Dorsolateral prefrontal cortex (tissue), 120 donors: ENCODE measurements at regions of chr17 and their contacts with region 1.

Region 1: DNA sequence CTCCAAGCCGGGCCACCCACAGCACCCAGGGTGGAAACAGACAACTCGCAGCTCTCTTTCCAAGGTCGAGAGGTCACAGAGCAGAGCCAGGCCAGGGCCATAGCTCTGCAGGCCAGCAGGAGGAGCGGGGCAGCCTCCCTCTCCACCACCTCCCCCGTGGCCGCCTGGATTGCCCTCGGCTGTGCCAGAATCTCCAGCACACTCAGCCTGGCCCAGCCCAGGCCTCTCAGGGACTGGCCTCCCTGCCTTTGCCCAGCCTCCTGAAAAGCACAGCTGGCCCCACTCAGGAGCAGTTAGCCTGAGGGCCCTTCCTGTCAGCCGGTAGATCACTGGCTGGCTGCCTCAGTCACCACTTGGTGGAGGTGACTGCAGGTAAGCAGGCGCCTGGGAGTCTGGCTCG is 85.8 kb upstream of the SEC14L1 start:
- DNase-seq: no peak
- H3K4me3 ChIP-seq: no peak overlapping the region
- H3K27ac ChIP-seq: no peak overlapping the region
- H3K27me3 ChIP-seq: peaks cover 0 to 10% (median 0%) of the 10 kb centered on the region in 45 donors
- CTCF ChIP-seq: no peak

Region 2: DNA sequence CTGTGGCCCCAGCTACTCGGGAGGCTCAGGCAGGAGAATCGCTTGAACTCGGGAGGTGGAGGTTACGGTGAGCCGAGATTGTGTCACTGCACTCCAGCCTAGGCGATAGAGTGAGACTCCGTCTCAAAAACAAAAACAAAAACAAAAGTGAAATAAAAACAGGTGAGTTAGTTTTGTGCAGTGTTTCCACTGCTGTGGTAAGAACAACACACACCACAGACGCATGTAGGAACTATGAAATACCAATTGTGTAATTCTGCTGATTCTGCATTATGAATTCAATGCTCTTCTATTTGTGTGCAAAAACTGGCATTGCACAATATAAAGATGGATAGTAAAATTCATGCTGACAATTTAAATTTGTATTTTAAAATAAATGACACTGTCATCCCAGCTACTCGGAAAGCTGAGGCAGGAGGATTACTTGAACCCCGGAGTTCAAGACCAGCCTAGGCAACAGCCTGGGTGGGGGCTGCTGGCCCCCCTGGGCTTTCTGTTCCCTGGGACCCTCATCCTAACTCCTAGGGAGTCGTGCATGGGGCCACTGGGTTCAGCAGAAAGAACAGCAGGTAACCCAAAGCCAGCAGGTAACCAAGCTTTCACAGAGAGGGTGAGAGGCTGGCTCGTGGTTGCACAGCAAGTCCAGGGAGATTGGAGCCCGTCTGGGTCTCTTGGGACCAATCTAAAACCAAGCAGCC is 543.1 kb before region 1 on chr17:
- intact Hi-C with region 1: loop called in 1 of 2 experiments (anchors 5 kb)
- DNase-seq: no peak
- H3K4me3 ChIP-seq: no peak overlapping the region
- H3K27ac ChIP-seq: no peak overlapping the region
- H3K27me3 ChIP-seq: peaks cover 0 to 3% (median 0%) of the 10 kb centered on the region in 45 donors
- CTCF ChIP-seq: no peak

Region 3: DNA sequence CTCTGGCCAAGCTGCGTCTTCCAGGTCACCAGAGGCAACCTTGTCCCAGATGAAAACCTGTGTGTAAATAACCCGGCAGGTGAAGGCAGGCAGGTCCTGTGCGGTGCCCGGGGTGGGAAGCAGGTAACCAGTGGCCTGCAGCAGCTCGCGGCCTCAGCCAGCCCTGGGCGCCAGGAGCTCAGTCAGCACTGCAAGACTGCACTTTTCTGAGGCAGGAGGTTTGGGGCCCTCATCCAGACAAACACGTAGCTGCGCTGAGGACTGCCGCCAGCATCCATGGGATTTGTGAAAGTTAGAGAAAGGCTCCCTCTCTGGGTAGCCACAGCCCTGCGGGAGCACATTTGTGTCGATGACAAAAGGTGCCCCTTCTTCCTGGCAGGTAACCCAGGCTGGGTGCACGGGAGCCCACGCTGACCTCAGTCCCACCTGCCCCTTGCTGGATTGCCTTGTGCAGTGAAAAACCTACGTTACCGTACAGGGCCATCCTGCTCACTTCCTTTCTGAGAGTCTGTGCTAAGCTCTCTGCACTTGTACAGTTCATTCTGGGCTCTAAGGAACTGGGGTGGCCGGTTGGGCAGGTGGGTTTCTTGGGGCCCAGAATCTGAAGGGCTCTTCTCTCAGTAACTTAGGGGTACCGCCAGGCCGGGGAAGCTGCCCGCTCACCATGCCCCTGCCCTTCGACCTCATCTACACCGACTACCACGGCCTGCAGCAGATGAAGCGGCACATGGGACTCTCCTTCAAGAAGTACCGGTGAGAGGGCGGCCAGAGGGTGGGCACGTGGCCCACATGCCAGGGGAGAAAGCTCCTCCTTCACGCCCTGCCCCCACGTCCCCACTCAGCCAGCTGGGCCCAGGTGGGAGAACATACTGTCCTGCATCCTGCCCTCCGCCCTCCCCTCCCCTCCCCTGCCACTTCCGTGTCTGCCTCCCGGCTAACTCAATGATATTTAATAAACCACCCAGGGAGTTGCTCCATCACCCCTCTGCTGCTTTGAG is 130.3 kb before region 1 on chr17:
- intact Hi-C with region 1: no loop called
- DNase-seq: peak in 2 of 10 donors; percentile 29 to 61
- H3K4me3 ChIP-seq: no peak overlapping the region
- H3K27ac ChIP-seq: peak overlapping the region in 25 of 59 donors; percentile 1 to 76 (median 38)
- H3K27me3 ChIP-seq: no peaks in the 10 kb centered on the region
- CTCF ChIP-seq: no peak

Region 4: GRCh38 chr17:77011173-77012011 is 43.5 kb before region 1 on chr17:
- intact Hi-C with region 1: loop called in 1 of 2 experiments (anchors 5 kb)
- DNase-seq: peak in 3 of 10 donors; percentile 47 to 73 (median 58)
- H3K4me3 ChIP-seq: no peak overlapping the region
- H3K27ac ChIP-seq: no peak overlapping the region
- H3K27me3 ChIP-seq: peaks cover 0 to 3% (median 0%) of the 10 kb centered on the region in 45 donors
- CTCF ChIP-seq: peak; percentile 18 to 69 (median 55)

Region 5: GRCh38 chr17:77208217-77208808 is 153.4 kb after region 1 on chr17:
- intact Hi-C with region 1: no loop called
- DNase-seq: peak in 7 of 10 donors; percentile 50 to 78 (median 60)
- H3K4me3 ChIP-seq: peak overlapping the region in 6 of 59 donors; percentile 12 to 25 (median 18)
- H3K27ac ChIP-seq: peak overlapping the region; percentile 44 to 98 (median 94)
- H3K27me3 ChIP-seq: no peaks in the 10 kb centered on the region
- CTCF ChIP-seq: peak in 50 of 56 donors; percentile 16 to 70 (median 49)

Region 6: DNA sequence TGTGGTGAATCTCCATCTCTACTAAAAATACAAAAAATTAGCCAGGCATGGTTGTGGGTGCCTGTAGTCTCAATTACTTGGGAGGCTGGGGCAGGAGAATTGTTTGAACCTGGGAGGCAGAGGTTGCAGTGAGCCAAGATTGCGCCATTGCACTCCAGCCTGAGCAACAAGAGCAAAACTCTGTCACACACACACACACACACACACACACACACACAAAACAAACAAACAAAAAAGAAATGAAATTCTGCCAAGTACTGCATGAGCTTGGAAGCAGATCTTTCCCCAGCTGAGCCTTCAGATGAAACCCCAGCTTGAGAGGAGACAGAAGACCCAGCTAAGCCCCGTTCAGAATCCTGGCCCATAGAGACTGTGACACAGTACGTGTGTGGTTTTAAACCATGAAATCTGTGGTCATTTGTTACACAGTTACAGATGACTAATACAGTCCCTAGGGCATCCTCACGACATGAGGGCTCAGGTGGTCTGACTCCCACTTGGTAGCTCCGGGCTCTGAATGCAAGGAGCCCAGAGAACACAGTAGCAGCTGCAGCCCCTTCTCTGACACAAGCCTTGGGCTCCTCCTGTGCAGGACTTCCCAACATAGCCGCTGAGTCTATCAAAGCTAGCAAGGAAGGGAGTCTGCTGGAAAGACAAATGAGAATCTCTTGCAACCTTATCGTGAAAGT is 218.6 kb after region 1 on chr17:
- intact Hi-C with region 1: no loop called
- DNase-seq: no peak
- H3K4me3 ChIP-seq: no peak overlapping the region
- H3K27ac ChIP-seq: no peak overlapping the region
- H3K27me3 ChIP-seq: no peaks in the 10 kb centered on the region
- CTCF ChIP-seq: no peak